WTC11 (cell line): ENCODE measurements at regions of chr2 and their contacts with region 1.

Region 1: DNA sequence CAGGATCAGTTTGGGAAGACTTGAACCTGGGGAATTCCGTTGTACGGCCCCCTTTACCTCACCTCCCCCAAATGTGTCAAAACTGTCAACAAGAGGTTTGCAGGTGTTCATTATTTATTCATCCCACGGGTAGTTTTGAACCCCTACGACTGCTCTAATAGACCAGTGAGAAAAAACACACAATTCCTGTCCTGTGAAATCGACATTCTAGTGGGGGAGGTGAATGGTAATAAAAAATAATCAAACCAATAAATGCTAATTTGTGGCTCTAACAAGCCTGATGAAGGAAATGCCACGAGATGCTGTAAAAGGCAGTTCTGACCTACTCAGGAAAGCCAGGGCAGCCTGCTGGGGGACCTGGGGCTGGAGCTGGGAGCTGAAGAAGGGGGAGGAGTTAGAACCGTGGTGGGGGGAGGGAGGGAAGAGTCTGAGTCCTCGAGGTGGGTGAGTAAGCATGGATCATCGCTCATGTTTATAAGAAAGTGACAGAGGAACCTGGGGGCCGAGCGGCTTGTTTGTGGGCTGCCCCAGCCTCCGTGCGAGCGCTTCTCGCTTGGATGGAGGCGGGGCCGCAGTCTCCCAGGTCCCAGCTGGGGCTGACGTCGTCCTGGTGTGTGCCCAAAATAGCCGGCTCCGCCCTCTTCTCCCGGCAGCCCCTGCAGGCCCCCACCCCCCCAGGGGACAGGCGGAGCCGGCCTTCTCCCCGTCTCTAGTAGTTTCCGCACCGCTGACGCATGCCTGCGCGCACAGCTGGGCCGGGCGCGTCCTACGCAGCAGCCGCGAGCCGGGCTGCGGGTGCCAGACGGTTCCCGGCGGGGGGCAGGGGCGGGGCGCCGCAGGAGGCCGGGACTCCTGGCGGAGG is at the start of gene DNAJB2:
- DNase-seq: peak; percentile 97
- ATAC-seq: peak; percentile 81
- H3K4me3 Mint-ChIP-seq: peak within 1 kb of the TSS; percentile 88
- H3K27ac Mint-ChIP-seq: peak within 1 kb of the TSS; percentile 96
- H3K4me1 Mint-ChIP-seq: peaks cover 32% of the 10 kb centered on the region
- H3K27me3 Mint-ChIP-seq: peaks cover 5% of the 10 kb centered on the region; the same call in 1 of the 2 replicates
- CTCF ChIP-seq: no peak
- total RNA-seq, gene DNAJB2: 36.1 to 42.8 TPM (median 40.3 TPM) in 3 replicates

Region 2: GRCh38 chr2:219218732-219219701 is 59.9 kb before region 1 on chr2 and contains the start of gene ABCB6:
- CTCF ChIA-PET with region 1: interaction called, 11 read pairs
- POLR2A ChIA-PET with region 1: interaction called, 21 read pairs
- DNase-seq: peak; percentile 92
- ATAC-seq: peak; percentile 74
- H3K4me3 Mint-ChIP-seq: peak within 1 kb of the TSS; percentile 85
- H3K27ac Mint-ChIP-seq: peak within 1 kb of the TSS; percentile 79
- H3K4me1 Mint-ChIP-seq: peaks cover 25% of the 10 kb centered on the region
- H3K27me3 Mint-ChIP-seq: no peaks in the 10 kb centered on the region
- CTCF ChIP-seq: no peak
- total RNA-seq, gene ABCB6: 42.1 to 45.3 TPM (median 44.8 TPM) in 3 replicates

Region 3: GRCh38 chr2:219253753-219254590 is 24.9 kb before region 1 on chr2 and contains the start of gene TUBA4A:
- CTCF ChIA-PET with region 1: interaction called, 25 read pairs
- POLR2A ChIA-PET with region 1: interaction called, 15 read pairs
- DNase-seq: peak; percentile 85
- ATAC-seq: peak; percentile 81
- H3K4me3 Mint-ChIP-seq: peak within 1 kb of the TSS; percentile 79
- H3K27ac Mint-ChIP-seq: peak within 1 kb of the TSS; percentile 41; the same call in 1 of the 2 replicates
- H3K4me1 Mint-ChIP-seq: peaks cover 25% of the 10 kb centered on the region
- H3K27me3 Mint-ChIP-seq: peaks cover 69% of the 10 kb centered on the region
- CTCF ChIP-seq: no peak
- total RNA-seq, gene TUBA4A: 40.8 to 58.7 TPM (median 52.3 TPM) in 3 replicates

Region 4: DNA sequence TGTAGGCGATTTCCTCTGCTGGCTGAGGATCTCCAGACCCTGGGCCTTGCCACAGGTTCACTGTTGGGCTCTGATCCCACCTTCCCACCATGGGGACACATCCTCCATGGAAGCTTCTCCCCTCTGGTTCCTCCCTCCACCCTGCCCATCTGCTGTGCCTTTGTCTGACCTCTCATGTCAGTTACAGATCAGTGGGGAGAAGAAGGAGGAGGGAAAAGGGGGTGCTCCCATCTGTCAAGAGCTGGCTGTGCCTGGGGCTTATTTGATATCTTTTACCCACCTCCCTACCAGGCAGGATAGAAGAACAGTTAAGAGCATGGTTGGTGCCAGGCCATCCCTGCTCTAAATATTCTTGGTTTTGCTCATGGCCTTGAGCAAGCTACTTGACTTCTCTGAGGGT is 12.0 kb before region 1 on chr2:
- CTCF ChIA-PET with region 1: interaction called, 13 read pairs
- POLR2A ChIA-PET with region 1: no interaction called
- DNase-seq: no peak
- ATAC-seq: no peak
- H3K4me3 Mint-ChIP-seq: no peak overlapping the region
- H3K27ac Mint-ChIP-seq: no peak overlapping the region
- H3K4me1 Mint-ChIP-seq: no peaks in the 10 kb centered on the region
- H3K27me3 Mint-ChIP-seq: peaks cover 47% of the 10 kb centered on the region
- CTCF ChIP-seq: no peak

Region 5: DNA sequence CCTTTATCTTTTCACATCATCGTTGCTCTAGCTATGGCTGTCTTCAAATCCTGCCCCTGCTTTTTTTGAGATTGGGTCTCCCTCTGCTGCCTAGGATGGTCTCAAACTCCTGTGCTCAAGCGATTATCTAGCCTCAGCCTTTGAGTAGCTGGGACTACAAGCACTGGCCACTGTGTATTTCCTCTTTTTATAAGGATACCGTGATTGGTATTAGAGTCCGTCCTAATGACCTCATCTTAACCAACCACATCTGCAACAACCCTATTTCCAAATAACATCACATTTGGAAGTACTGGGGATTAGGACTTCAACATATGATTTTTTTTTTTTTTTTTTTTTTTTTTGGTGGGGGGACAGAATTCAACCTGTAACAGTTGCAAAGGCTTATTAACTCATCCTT is 44.5 kb after region 1 on chr2:
- CTCF ChIA-PET with region 1: no interaction called
- POLR2A ChIA-PET with region 1: no interaction called
- DNase-seq: no peak
- ATAC-seq: no peak
- H3K4me3 Mint-ChIP-seq: no peak overlapping the region
- H3K27ac Mint-ChIP-seq: no peak overlapping the region
- H3K4me1 Mint-ChIP-seq: no peaks in the 10 kb centered on the region
- H3K27me3 Mint-ChIP-seq: peaks cover 43% of the 10 kb centered on the region
- CTCF ChIP-seq: no peak

Region 6: DNA sequence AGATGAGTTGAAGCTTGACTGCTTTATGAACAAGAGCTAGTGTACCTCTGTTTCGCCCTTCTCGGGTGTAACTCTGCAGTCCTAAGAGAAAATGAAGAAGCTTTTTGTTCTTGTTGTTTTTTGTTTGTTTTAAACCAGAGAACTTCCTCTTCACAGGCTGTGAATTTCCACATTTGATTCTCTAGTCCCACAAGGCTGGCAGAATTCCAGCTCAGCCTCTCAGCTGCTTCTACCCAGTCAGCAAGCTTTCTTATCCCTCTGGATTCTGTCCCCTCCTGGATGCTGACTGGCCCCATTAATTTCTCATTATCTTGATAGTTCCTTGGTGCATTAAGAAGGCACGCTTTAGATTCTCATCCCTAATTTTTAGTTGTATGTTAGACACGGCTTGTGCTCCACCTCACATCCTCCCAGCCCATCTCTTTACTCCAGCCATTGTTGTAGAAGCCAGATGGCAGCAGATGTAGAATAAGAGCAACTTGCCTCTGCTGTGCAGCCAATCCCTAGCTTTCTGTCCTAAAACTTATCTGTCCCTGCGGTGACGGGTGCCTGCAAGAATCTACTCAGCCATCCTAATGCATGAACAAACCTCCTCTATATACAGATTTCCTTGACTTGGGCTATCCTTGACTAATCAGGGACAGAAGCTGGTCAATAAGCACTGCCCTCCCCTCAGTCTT is 66.0 kb after region 1 on chr2:
- CTCF ChIA-PET with region 1: no interaction called
- POLR2A ChIA-PET with region 1: no interaction called
- DNase-seq: no peak
- ATAC-seq: no peak; the same call in 1 of the 2 replicates
- H3K4me3 Mint-ChIP-seq: no peak overlapping the region
- H3K27ac Mint-ChIP-seq: no peak overlapping the region
- H3K4me1 Mint-ChIP-seq: no peaks in the 10 kb centered on the region
- H3K27me3 Mint-ChIP-seq: peaks cover 12% of the 10 kb centered on the region
- CTCF ChIP-seq: no peak

Region 7: GRCh38 chr2:219388127-219388844 is 109.4 kb after region 1 on chr2:
- CTCF ChIA-PET with region 1: interaction called, 12 read pairs
- POLR2A ChIA-PET with region 1: no interaction called
- DNase-seq: peak; percentile 97
- ATAC-seq: peak; percentile 76
- H3K4me3 Mint-ChIP-seq: peak overlapping the region; percentile 76
- H3K27ac Mint-ChIP-seq: no peak overlapping the region; the same call in 1 of the 2 replicates
- H3K4me1 Mint-ChIP-seq: peaks cover 7% of the 10 kb centered on the region
- H3K27me3 Mint-ChIP-seq: 0 out of 2 replicates have a peak, but pooled peaks cover 3% of the 10 kb centered on the region
- CTCF ChIP-seq: no peak